ENCODE measurements at regions of chr1 and their contacts with region 1.

Region 1: DNA sequence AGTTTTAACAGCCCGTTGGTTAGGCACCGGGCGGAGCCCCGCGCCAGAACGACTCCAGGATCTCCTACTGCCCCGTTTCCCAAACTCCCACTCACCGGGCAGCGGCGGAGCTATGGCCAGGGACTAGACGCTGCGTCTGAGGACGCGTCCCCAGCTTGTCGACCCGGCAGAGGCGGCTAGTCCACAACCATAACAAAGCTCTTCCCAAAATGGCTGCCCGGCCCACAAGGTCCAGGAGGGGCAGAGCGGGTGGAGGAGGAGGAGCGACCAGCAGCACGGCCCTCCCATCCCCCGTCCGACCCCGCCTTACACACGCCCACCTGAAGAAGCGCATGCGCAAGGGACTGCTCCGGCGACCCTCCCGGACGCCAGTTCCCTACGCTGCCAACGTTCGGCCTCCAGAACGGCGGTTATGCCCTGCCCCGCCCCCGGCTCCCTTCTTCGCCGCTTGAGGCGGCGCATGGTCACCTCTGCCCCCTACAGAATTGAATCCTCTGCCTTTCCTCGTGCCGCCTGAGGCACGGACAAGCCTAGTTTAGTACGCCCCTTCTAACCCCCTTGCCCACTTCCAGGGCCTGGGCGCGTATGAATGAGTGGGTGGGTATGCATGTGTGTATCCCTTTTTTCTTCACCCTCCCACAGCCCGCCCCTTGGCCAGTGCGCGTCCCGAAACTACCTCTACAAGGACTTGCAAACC is at the start of gene GPBP1L1:
- DNase-seq: peak; percentile 99
- ATAC-seq: peak; percentile 73
- H3K4me3 Mint-ChIP-seq: peak within 1 kb of the TSS; percentile 87
- H3K27ac Mint-ChIP-seq: peak within 1 kb of the TSS; percentile 95
- H3K4me1 Mint-ChIP-seq: peaks cover 52% of the 10 kb centered on the region
- H3K27me3 Mint-ChIP-seq: no peaks in the 10 kb centered on the region
- total RNA-seq, gene GPBP1L1: 101 to 112 TPM

Region 2: DNA sequence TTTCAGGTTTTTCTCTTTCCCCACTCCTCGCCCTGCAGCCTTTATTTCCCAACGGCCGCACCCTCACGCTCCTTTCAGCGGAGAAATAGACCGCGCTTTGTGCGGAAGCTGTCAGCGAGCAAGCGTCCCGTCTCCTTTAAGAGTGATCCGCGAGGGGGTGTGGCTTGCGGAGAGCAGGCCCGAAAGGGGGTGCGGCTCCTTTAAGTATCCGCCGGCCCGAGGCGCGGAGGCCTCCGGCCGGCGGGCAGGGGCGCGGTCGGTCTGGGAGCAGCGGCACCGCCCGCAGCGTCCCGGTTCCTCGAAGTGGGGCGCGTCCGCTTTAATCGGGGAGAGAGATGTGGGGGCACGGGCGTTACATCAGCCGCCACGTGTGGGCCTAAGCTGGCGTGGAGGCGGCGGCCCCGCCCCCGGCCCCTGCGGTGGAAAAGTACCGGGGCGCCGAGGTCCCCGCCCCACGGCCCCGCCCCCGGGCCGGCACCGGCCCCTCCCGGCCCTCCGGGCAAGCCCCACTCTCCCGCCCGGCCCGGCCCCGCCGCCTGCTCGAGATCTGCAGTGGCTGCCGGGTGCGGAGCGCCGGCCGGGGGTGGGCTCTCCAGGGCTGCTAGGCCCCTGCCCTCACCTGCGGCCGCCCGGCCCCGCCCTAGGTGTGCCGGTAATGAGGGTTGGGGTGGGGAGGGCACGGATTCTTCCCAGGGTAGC is 1656.4 kb before region 1 on chr1:
- CTCF ChIA-PET with region 1: no interaction called
- POLR2A ChIA-PET with region 1: no interaction called
- intact Hi-C with region 1: loop called in 1 of 2 experiments (anchors 5 kb)
- DNase-seq: peak; percentile 94
- ATAC-seq: peak; percentile 83
- H3K4me3 Mint-ChIP-seq: peak overlapping the region; percentile 88
- H3K27ac Mint-ChIP-seq: peak overlapping the region; percentile 96
- H3K4me1 Mint-ChIP-seq: peaks cover 24% of the 10 kb centered on the region
- H3K27me3 Mint-ChIP-seq: no peaks in the 10 kb centered on the region

Region 3: GRCh38 chr1:44985747-44986359 is 700.6 kb before region 1 on chr1:
- CTCF ChIA-PET with region 1: no interaction called
- POLR2A ChIA-PET with region 1: no interaction called
- intact Hi-C with region 1: loop called in 1 of 2 experiments (anchors 1 kb)
- DNase-seq: no peak
- ATAC-seq: no peak
- H3K4me3 Mint-ChIP-seq: peak overlapping the region; percentile 96
- H3K27ac Mint-ChIP-seq: peak overlapping the region; percentile 87
- H3K4me1 Mint-ChIP-seq: peaks cover 22% of the 10 kb centered on the region
- H3K27me3 Mint-ChIP-seq: no peaks in the 10 kb centered on the region

Region 4: GRCh38 chr1:45490626-45491486 is 195.6 kb before region 1 on chr1 and contains the start of gene TESK2:
- CTCF ChIA-PET with region 1: interaction called, 3 read pairs
- POLR2A ChIA-PET with region 1: no interaction called
- intact Hi-C with region 1: loop called in 1 of 2 experiments (anchors 1 kb)
- DNase-seq: peak; percentile 97
- ATAC-seq: peak; percentile 94
- H3K4me3 Mint-ChIP-seq: no peak within 1 kb of the TSS
- H3K27ac Mint-ChIP-seq: no peak within 1 kb of the TSS
- H3K4me1 Mint-ChIP-seq: peaks cover 4% of the 10 kb centered on the region
- H3K27me3 Mint-ChIP-seq: no peaks in the 10 kb centered on the region
- total RNA-seq, gene TESK2: 3.1 to 3.3 TPM

Region 5: GRCh38 chr1:45583264-45583665 is 103.2 kb before region 1 on chr1:
- CTCF ChIA-PET with region 1: interaction called, 3 read pairs
- POLR2A ChIA-PET with region 1: interaction called, 9 read pairs
- intact Hi-C with region 1: loop called (anchors 1 kb)
- DNase-seq: peak; percentile 97
- ATAC-seq: peak; percentile 84
- H3K4me3 Mint-ChIP-seq: peak overlapping the region; percentile 91
- H3K27ac Mint-ChIP-seq: peak overlapping the region; percentile 100
- H3K4me1 Mint-ChIP-seq: peaks cover 20% of the 10 kb centered on the region
- H3K27me3 Mint-ChIP-seq: no peaks in the 10 kb centered on the region

Region 6: GRCh38 chr1:46132529-46133180 is 446.2 kb after region 1 on chr1 and contains the start of gene PIK3R3:
- CTCF ChIA-PET with region 1: no interaction called
- POLR2A ChIA-PET with region 1: no interaction called
- intact Hi-C with region 1: loop called in 1 of 2 experiments (anchors 5 kb)
- DNase-seq: peak; percentile 94
- ATAC-seq: peak; percentile 98
- H3K4me3 Mint-ChIP-seq: peak within 1 kb of the TSS; percentile 74
- H3K27ac Mint-ChIP-seq: peak within 1 kb of the TSS; percentile 87
- H3K4me1 Mint-ChIP-seq: peaks cover 21% of the 10 kb centered on the region
- H3K27me3 Mint-ChIP-seq: peaks cover 51% of the 10 kb centered on the region
- total RNA-seq, gene PIK3R3: 0.46 to 0.78 TPM

Region 7: GRCh38 chr1:46254668-46255067 is 568.2 kb after region 1 on chr1:
- CTCF ChIA-PET with region 1: no interaction called
- POLR2A ChIA-PET with region 1: no interaction called
- intact Hi-C with region 1: no loop called
- DNase-seq: no peak
- ATAC-seq: no peak
- H3K4me3 Mint-ChIP-seq: no peak overlapping the region
- H3K27ac Mint-ChIP-seq: no peak overlapping the region
- H3K4me1 Mint-ChIP-seq: peaks cover 6% of the 10 kb centered on the region
- H3K27me3 Mint-ChIP-seq: no peaks in the 10 kb centered on the region

Region 8: DNA sequence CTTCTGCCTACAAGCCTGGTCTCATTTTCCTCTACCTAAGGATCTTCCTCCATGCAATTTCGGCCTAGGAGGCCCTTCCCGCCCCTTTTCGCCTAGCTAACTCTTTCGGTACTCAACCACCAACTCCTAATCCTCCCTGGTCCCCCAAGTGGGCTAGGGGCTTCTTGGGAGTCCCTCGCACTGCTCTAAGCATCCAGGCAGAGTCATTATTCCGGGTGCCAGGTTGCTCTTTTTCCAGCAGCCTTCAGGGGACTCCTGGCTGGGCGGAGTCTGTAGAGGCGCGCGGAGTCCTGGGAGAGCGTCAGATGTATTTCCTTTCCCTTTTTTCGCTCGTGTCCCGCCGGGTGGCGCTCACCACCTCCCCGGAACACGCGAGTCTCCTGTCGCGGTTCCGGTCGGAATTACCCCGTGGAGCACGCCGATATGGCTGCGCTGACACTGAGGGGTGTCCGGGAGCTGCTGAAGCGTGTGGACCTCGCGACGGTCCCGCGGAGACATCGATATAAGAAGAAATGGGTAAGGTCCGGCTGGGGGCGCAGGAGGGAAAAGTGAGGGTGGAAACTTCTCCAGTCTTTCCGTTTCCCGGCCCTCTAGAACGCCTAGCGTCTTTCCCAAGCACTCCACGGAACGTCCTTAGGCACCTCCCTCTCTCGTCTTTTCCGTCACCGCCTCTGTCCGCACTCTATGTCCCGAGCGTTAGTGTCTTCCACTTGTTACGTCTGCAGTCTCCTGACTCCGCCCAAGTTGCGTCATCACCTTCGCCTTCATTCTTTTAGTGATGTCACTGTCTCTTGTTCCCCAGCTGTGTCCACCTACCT is 654.1 kb after region 1 on chr1 and contains the start of gene NSUN4:
- CTCF ChIA-PET with region 1: no interaction called
- POLR2A ChIA-PET with region 1: interaction called, 3 read pairs
- intact Hi-C with region 1: loop called (anchors 1 to 5 kb)
- DNase-seq: peak; percentile 93
- ATAC-seq: peak; percentile 94
- H3K4me3 Mint-ChIP-seq: peak within 1 kb of the TSS; percentile 87
- H3K27ac Mint-ChIP-seq: peak within 1 kb of the TSS; percentile 99
- H3K4me1 Mint-ChIP-seq: peaks cover 44% of the 10 kb centered on the region
- H3K27me3 Mint-ChIP-seq: no peaks in the 10 kb centered on the region
- total RNA-seq, gene NSUN4: 26.1 to 31.3 TPM

Measured in activated CD4-positive, alpha-beta T cell treated with anti-CD3 and anti-CD28 coated beads for 36 hours (primary cell).